ENCODE measurements at regions of chr11 and their contacts with region 1.

Region 1: GRCh38 chr11:75204685-75205563 is 35.6 kb upstream of the TPBGL start:
- DNase-seq: peak; percentile 89
- CTCF ChIP-seq: peak; percentile 88

Region 2: DNA sequence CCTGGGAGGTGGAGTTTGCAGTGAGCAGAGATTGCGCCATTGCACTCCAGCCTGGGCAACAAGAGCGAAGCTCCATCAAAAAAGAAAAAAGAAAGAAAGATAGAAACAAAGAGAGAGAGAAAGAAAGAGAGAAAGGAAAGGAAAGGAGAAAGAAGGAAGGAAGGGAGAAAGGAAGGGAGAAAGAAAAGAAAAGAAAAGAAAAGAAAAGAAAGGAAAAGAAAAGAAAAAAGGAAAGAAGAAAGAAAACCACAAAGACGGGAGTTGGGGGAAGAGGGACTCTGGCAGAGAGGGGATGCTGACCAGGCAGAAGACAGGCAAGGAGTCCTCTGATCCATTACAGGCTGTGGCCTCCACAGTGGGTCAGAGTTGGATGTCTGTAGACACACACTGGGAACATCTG is 72.8 kb before region 1 on chr11:
- in situ Hi-C with region 1: no loop called
- DNase-seq: no peak
- CTCF ChIP-seq: no peak

Region 3: DNA sequence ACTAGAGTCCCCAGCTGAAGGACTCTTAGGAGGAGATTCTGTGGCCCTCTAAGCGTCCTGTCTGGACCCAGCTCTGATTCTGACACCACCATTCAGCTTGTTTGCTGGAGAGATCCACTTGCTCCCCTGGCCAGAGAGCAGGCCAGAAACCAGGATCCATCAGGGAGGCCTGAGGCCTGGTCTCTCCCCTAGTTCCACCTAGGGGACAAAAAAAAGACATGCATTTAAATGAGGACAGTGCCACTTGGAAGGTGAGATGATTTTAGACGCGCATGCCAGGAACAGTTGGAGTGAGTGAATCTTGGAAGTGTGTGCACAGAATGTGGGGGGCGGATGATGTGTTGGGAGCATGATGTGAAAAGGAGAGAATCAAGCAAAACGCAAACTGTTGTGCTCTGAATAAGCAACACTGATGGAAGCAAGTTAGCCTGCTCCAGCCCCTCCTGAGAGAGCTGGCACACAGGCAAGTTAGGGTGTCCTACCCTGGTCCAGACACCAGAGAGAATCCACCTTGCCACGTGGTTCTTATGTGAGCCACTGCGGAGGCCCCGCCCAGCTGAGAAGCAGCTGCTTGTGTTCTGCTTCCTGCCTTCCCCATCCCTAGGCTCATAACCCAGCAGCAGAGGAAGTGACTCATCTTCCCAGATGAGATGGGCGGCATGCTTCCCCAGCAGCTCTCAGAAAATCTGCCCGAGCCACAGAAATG is 62.1 kb before region 1 on chr11:
- in situ Hi-C with region 1: loop called (anchors 10 kb)
- DNase-seq: peak; percentile 65
- CTCF ChIP-seq: no peak

Region 4: DNA sequence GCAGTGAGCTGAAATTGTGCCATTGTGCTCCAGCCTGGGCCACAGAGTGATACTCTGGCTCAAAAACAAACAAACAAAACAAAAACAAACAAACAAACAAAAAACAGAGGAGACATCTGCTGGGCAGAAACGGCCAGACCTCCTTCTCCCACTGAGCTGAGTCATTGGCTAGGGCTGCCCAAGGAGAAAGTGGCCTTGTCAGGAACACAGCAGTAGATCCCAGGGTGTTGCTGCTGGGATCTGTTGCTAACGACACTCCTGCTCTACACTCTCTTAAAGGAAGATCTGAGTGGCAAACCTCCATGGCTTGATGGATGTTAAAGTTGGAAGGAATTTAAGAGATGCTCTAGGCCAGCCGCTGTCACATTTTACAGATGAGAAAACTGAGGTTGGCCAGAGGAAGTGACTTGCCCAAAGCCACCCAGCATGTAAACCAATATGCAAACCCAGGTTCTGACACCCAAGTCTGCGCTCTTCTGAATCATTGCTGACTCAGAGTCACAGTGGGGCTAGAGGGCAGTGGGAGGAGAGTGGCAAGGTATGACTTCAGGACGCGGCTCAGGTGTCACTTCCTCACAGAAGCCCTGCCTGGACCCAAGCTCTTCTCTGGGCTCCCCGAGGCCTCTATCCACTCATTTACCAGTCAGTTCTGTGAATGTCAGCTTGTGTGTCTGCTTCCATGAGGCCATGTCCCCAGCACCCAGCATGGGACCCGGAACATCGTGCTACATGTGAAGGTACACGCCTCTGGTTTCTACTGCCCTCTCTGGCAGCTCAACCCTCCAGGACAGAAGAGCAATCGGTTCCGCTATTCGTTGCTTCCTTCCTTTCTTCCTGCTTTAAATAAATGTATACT is 332.1 kb after region 1 on chr11:
- in situ Hi-C with region 1: no loop called
- DNase-seq: peak; percentile 74
- CTCF ChIP-seq: no peak

Measured in GM13976 (cell line).